CD4-positive, alpha-beta T cell (primary cell): ENCODE measurements at regions of chr17 and their contacts with region 1.

Region 1: GRCh38 chr17:42337442-42337841 is 49.1 kb downstream of the STAT5A start:
- DNase-seq: peak; percentile 55 to 91 (median 66)
- ATAC-seq: peak; percentile 84
- H3K4me3 ChIP-seq: no peak overlapping the region
- H3K4me3 Mint-ChIP-seq: peak overlapping the region; percentile 56
- H3K27ac ChIP-seq: peak overlapping the region; percentile 42 to 56
- H3K27ac Mint-ChIP-seq: peak overlapping the region; percentile 89
- H3K4me1 ChIP-seq: peaks cover 57% of the 10 kb centered on the region
- H3K4me1 Mint-ChIP-seq: peaks cover 51% of the 10 kb centered on the region
- H3K27me3 ChIP-seq: no peaks in the 10 kb centered on the region
- H3K27me3 Mint-ChIP-seq: no peaks in the 10 kb centered on the region
- CTCF ChIP-seq: no peak

Region 2: DNA sequence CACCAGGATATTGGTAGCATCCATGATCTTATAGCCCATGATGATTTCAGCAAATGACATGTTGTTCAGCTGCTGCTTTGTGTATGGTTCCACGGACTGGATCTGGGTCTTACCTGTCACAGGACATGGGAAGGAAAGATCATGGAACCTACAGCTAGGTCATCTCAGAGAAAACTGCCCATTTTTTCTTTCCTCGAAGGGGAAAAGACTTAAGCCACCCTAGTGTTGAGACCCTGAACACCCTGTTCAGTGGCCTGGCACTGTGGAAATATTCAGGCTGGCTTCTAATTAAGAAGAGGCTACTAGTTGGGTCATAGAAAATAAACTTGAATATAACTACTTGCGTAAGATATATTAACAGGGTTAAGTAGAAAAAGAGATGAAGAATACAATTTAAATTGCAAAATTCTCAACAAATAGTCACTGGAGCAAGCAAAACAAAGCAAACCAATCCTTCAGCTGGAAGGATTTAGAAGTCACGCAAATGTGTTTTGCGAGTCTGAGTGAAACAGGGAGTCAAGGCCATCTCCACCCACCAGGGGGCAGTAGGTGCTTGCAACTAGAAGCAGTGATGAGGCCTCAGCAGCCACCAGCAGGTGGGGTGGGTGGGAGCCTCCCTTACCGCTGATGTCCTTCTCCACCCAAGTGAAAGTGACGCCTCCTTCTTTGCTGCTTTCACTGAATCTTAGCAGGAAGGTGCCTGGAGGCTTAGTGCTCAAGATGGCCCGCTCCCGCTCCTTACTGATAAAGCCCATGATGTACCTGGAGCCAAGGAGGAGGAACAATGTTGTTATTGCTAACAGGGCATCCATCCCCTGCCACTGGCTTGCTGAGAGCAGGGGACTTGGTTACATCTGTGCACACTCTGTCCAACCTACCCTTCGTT is 14.8 kb before region 1 on chr17:
- CTCF ChIA-PET with region 1: interaction called, 13 read pairs
- POLR2A ChIA-PET with region 1: interaction called, 5 read pairs
- intact Hi-C with region 1: no loop called
- DNase-seq: peak; percentile 89 to 98 (median 95)
- ATAC-seq: peak; percentile 97
- H3K4me3 ChIP-seq: no peak overlapping the region
- H3K4me3 Mint-ChIP-seq: no peak overlapping the region
- H3K27ac ChIP-seq: peak overlapping the region in 1 of 2 donors; percentile 18
- H3K27ac Mint-ChIP-seq: peak overlapping the region; percentile 76
- H3K4me1 ChIP-seq: peaks cover 26% of the 10 kb centered on the region
- H3K4me1 Mint-ChIP-seq: peaks cover 37% of the 10 kb centered on the region
- H3K27me3 ChIP-seq: no peaks in the 10 kb centered on the region
- H3K27me3 Mint-ChIP-seq: no peaks in the 10 kb centered on the region
- CTCF ChIP-seq: peak; percentile 100

Region 3: GRCh38 chr17:42405963-42406495 is 68.6 kb after region 1 on chr17:
- CTCF ChIA-PET with region 1: interaction called, 11 read pairs
- POLR2A ChIA-PET with region 1: no interaction called
- intact Hi-C with region 1: loop called in 1 of 2 experiments (anchors 5 kb)
- DNase-seq: peak; percentile 70 to 90 (median 82)
- ATAC-seq: peak; percentile 88
- H3K4me3 ChIP-seq: no peak overlapping the region
- H3K4me3 Mint-ChIP-seq: no peak overlapping the region
- H3K27ac ChIP-seq: no peak overlapping the region
- H3K27ac Mint-ChIP-seq: no peak overlapping the region
- H3K4me1 ChIP-seq: peaks cover 13% of the 10 kb centered on the region
- H3K4me1 Mint-ChIP-seq: peaks cover 11% of the 10 kb centered on the region
- H3K27me3 ChIP-seq: no peaks in the 10 kb centered on the region
- H3K27me3 Mint-ChIP-seq: no peaks in the 10 kb centered on the region
- CTCF ChIP-seq: peak; percentile 76

Region 4: DNA sequence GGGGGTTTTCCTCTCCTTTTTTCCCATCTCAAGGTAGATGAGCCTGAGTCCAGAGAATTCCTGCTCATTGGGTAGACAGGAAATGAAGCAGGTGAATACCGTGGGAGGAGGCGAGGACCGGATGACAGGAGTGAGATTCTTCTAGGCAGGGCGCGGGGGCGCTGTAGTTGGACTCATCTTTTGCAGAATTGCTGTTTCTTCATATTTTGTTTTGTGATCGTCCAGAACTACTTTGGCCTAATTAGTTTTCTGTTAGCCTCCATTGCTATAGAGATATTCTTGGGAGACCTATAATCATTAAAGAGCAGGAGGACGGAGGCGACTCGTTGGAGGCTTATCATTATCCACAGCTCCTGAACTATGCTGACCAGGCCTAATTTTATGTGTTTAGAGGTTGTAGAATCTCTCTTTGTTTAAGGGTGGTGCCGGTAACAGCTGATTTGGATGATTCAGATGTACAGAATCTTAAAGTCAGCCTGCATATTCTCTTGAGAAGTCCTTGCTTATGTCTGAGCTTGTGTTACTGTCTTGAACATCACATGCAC is 121.9 kb after region 1 on chr17:
- CTCF ChIA-PET with region 1: no interaction called
- POLR2A ChIA-PET with region 1: no interaction called
- intact Hi-C with region 1: loop called in 1 of 2 experiments (anchors 5 kb)
- DNase-seq: peak in 4 of 14 experiments; percentile 39 to 44 (median 41)
- ATAC-seq: peak; percentile 11
- H3K4me3 ChIP-seq: peak overlapping the region; percentile 64
- H3K4me3 Mint-ChIP-seq: peak overlapping the region; percentile 92
- H3K27ac ChIP-seq: peak overlapping the region in 1 of 2 donors; percentile 3
- H3K27ac Mint-ChIP-seq: peak overlapping the region; percentile 85
- H3K4me1 ChIP-seq: peaks cover 45% of the 10 kb centered on the region
- H3K4me1 Mint-ChIP-seq: peaks cover 47% of the 10 kb centered on the region
- H3K27me3 ChIP-seq: no peaks in the 10 kb centered on the region
- H3K27me3 Mint-ChIP-seq: no peaks in the 10 kb centered on the region
- CTCF ChIP-seq: peak; percentile 23